ENCODE measurements at regions of chr2 and their contacts with region 1.

Region 1: GRCh38 chr2:65366595-65367125 is 65.7 kb downstream of the SPRED2 start:
- DNase-seq: peak; percentile 80
- H3K4me3 ChIP-seq: peak overlapping the region; percentile 54
- H3K27ac ChIP-seq: peak overlapping the region; percentile 83
- H3K27me3 ChIP-seq: no peaks in the 10 kb centered on the region
- CTCF ChIP-seq: no peak

Region 2: GRCh38 chr2:65382776-65383357 is 16.2 kb after region 1 on chr2:
- CTCF ChIA-PET with region 1: interaction called, 4 read pairs
- POLR2A ChIA-PET with region 1: interaction called, 10 read pairs
- DNase-seq: peak; percentile 82
- H3K4me3 ChIP-seq: no peak overlapping the region; the same call in 1 of the 2 replicates
- H3K27ac ChIP-seq: peak overlapping the region; percentile 87
- H3K27me3 ChIP-seq: no peaks in the 10 kb centered on the region
- CTCF ChIP-seq: no peak

Region 3: GRCh38 chr2:65430603-65431420 is 64.2 kb after region 1 on chr2:
- CTCF ChIA-PET with region 1: no interaction called
- POLR2A ChIA-PET with region 1: interaction called, 11 read pairs
- DNase-seq: no peak
- H3K4me3 ChIP-seq: peak overlapping the region; percentile 85
- H3K27ac ChIP-seq: no peak overlapping the region
- H3K27me3 ChIP-seq: no peaks in the 10 kb centered on the region
- CTCF ChIP-seq: no peak

Measured in AG04450 (cell line).